Endothelial cell of umbilical vein (primary cell): ENCODE measurements at regions of chrX and their contacts with region 1.

Region 1: GRCh38 chrX:16695079-16695676 is 17.3 kb downstream of the CTPS2 start:
- DNase-seq: peak; percentile 55
- H3K4me3 ChIP-seq: no peak overlapping the region
- H3K27ac ChIP-seq: no peak overlapping the region
- H3K4me1 ChIP-seq: no peaks in the 10 kb centered on the region
- H3K27me3 ChIP-seq: no peaks in the 10 kb centered on the region
- CTCF ChIP-seq: peak; percentile 61 to 63
- POLR2A ChIP-seq: no peak

Region 2: GRCh38 chrX:16436348-16437188 is 258.6 kb before region 1 on chrX:
- CTCF ChIA-PET with region 1: interaction called, 6 read pairs
- POLR2A ChIA-PET with region 1: no interaction called
- dilution Hi-C with region 1: no loop called
- intact Hi-C with region 1: loop called (anchors 1 kb)
- DNase-seq: peak; percentile 54
- H3K4me3 ChIP-seq: no peak overlapping the region
- H3K27ac ChIP-seq: no peak overlapping the region
- H3K4me1 ChIP-seq: no peaks in the 10 kb centered on the region
- H3K27me3 ChIP-seq: no peaks in the 10 kb centered on the region
- CTCF ChIP-seq: peak; percentile 53 to 56
- POLR2A ChIP-seq: no peak